Mammary epithelial cell (primary cell): ENCODE measurements at regions of chr1 and their contacts with region 1.

Region 1: DNA sequence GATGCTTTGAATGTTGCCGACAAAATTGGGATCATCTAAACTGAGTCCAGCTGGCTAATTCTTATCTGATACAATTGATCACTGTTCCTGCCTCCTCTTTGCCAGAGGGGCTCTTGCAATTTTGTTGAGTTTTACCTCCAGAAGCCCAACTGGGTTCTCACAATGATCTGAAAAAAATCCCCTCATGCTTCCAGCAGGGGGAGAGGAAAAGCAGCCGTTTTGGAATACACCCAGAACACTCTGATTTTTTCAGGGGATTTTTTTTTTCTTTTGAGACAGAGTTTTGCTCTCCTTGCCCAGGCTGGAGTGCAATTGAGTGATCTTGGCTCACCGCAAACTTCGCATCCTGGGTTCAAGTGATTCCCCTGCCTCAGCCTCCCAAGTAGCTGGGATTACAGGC is 13.9 kb upstream of the RERE start:
- DNase-seq: no peak
- H3K4me3 ChIP-seq: no peak overlapping the region
- H3K27ac ChIP-seq: no peak overlapping the region
- H3K4me1 ChIP-seq: no peaks in the 10 kb centered on the region
- H3K27me3 ChIP-seq: no peaks in the 10 kb centered on the region
- CTCF ChIP-seq: peak in 1 of 2 donors; percentile 16

Region 2: GRCh38 chr1:8733466-8733865 is 97.9 kb before region 1 on chr1:
- CTCF ChIA-PET with region 1: no interaction called
- dilution Hi-C with region 1: loop called (anchors 5 kb)
- in situ Hi-C with region 1: no loop called
- intact Hi-C with region 1: no loop called
- DNase-seq: peak; percentile 62
- H3K4me3 ChIP-seq: no peak overlapping the region
- H3K27ac ChIP-seq: no peak overlapping the region
- H3K4me1 ChIP-seq: no peaks in the 10 kb centered on the region
- H3K27me3 ChIP-seq: no peaks in the 10 kb centered on the region
- CTCF ChIP-seq: no peak

Region 3: GRCh38 chr1:8789314-8790214 is 41.8 kb before region 1 on chr1:
- CTCF ChIA-PET with region 1: no interaction called
- dilution Hi-C with region 1: loop called (anchors 5 kb)
- in situ Hi-C with region 1: no loop called
- intact Hi-C with region 1: no loop called
- DNase-seq: peak; percentile 63
- H3K4me3 ChIP-seq: no peak overlapping the region
- H3K27ac ChIP-seq: no peak overlapping the region
- H3K4me1 ChIP-seq: peaks cover 10% of the 10 kb centered on the region
- H3K27me3 ChIP-seq: no peaks in the 10 kb centered on the region
- CTCF ChIP-seq: no peak